Sigmoid colon (tissue), 7 donors: ENCODE measurements at regions of chr1 and their contacts with region 1.

Region 1: GRCh38 chr1:226046240-226046639 is 16.3 kb upstream of the H3-3A start:
- DNase-seq: no peak
- H3K4me3 ChIP-seq: no peak overlapping the region
- H3K27ac ChIP-seq: no peak overlapping the region
- H3K4me1 ChIP-seq: no peaks in the 10 kb centered on the region
- H3K27me3 ChIP-seq: no peaks in the 10 kb centered on the region
- CTCF ChIP-seq: no peak
- EP300 ChIP-seq: no peak
- POLR2A ChIP-seq: no peak

Region 2: GRCh38 chr1:226009650-226010044 is 36.6 kb before region 1 on chr1:
- intact Hi-C with region 1: loop called (anchors 5 kb)
- DNase-seq: no peak
- H3K4me3 ChIP-seq: no peak overlapping the region
- H3K27ac ChIP-seq: no peak overlapping the region
- H3K4me1 ChIP-seq: no peaks in the 10 kb centered on the region
- H3K27me3 ChIP-seq: no peaks in the 10 kb centered on the region
- CTCF ChIP-seq: no peak
- EP300 ChIP-seq: no peak
- POLR2A ChIP-seq: no peak

Region 3: GRCh38 chr1:226026833-226027232 is 19.4 kb before region 1 on chr1:
- intact Hi-C with region 1: no loop called
- DNase-seq: no peak
- H3K4me3 ChIP-seq: no peak overlapping the region
- H3K27ac ChIP-seq: no peak overlapping the region
- H3K4me1 ChIP-seq: no peaks in the 10 kb centered on the region
- H3K27me3 ChIP-seq: no peaks in the 10 kb centered on the region
- CTCF ChIP-seq: no peak
- EP300 ChIP-seq: no peak
- POLR2A ChIP-seq: no peak